AG04449 (cell line): ENCODE measurements at regions of chr17 and their contacts with region 1.

Region 1: GRCh38 chr17:28240991-28241340 is 78.0 kb upstream of the TMEM97 start:
- DNase-seq: no peak
- H3K4me3 ChIP-seq: no peak overlapping the region
- CTCF ChIP-seq: no peak

Region 2: GRCh38 chr17:28118362-28118761 is 122.6 kb before region 1 on chr17:
- CTCF ChIA-PET with region 1: no interaction called
- POLR2A ChIA-PET with region 1: no interaction called
- DNase-seq: no peak
- H3K4me3 ChIP-seq: no peak overlapping the region
- CTCF ChIP-seq: no peak

Region 3: GRCh38 chr17:28227316-28228125 is 13.4 kb before region 1 on chr17:
- CTCF ChIA-PET with region 1: interaction called, 38 read pairs
- POLR2A ChIA-PET with region 1: no interaction called
- DNase-seq: no peak
- H3K4me3 ChIP-seq: peak overlapping the region; percentile 51
- CTCF ChIP-seq: no peak